ENCODE measurements at regions of chr5 and their contacts with region 1.

Region 1: DNA sequence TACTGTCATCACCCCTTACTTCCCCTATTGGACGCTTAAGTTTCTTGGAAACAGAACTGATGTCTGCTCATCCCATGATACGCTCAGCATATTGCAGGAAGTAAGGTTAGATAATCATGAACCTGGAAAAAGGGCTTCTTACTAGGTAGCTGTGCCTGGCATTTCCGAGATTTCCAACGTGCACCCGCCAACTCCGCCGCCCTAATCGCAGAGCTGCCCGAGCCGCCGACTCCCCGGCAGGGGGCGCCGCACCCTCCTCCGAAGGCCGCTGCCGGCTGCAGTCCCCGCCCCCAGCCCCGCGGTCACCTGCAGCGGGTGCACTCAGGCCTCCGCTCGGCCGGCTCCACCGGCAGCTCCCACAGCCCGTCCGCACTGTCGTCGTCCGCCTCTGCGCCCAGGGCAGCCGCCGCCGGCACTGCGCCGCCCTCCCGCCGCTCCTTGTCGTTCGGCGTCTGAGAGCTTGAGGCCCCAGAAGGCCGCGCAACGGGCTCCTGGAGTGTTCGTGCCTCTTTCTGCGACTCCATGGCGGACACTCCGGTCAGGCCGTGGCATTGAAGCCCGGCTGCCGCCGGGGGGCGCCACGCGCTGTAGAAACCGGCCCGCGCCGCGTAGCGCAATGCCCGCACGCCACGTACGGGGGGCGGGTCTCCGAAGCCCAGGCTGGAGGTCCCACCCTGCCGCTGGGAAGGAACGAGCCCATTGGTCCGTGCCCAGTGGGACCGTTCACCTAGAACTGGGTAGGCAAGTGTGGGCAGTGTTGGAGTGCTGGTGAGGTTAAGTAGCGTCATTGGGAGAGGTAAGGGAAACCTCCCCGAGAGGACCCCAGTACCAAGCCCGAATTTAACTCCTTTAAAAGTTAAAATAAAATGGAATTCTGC is at the start of gene DTWD2:
- DNase-seq: peak; percentile 96
- H3K4me3 ChIP-seq: peak within 1 kb of the TSS; percentile 75
- H3K27ac ChIP-seq: peak within 1 kb of the TSS; percentile 77
- H3K4me1 ChIP-seq: peaks cover 33% of the 10 kb centered on the region
- CTCF ChIP-seq: peak; percentile 98
- total RNA-seq, gene DTWD2: 4.2 and 8.6 TPM in 2 replicates

Region 2: DNA sequence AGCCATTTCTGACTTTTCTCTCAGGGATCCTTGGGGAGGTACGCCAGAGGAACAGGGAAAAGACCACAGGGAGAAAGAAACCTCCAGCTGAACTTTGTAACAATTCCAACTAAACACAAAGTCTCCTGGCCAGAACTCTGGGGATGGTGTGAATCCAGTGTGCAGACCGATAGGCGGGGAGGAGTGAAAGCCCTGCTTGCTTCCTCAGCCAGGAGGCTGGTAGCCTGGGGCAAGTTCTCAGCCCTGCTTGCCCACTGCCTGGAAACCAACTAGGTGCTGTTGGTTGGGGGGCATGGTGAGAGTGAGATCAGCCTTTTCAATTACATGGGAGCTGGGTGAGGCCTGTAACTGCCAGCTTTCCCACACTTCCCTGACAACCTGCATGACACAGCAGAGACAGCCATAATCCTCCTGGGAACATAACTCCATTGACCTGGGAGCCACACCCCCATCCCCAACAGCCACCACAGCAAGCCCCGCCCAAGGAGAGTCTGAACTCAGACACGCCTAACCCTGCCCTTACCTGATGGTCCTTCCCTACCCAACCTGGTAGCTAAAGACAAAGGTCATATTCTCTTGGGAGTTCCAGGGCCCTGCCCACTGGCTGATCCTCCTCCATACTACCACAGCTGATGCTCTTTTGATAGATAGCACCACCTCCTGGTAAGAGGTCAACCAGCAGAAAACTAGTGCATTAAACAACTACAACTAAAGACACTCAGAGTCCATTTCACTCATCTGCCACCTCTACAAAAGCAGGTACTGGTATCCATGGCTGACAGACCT is 267.5 kb after region 1 on chr5:
- CTCF ChIA-PET with region 1: interaction called, 3 read pairs
- POLR2A ChIA-PET with region 1: no interaction called
- intact Hi-C with region 1: loop called (anchors 1 kb)
- DNase-seq: peak; percentile 54
- H3K4me3 ChIP-seq: no peak overlapping the region
- H3K27ac ChIP-seq: no peak overlapping the region
- H3K4me1 ChIP-seq: no peaks in the 10 kb centered on the region
- CTCF ChIP-seq: peak; percentile 74

Region 3: GRCh38 chr5:119435436-119436132 is 447.4 kb after region 1 on chr5:
- CTCF ChIA-PET with region 1: interaction called, 7 read pairs
- POLR2A ChIA-PET with region 1: interaction called, 3 read pairs
- intact Hi-C with region 1: loop called (anchors 1 kb)
- DNase-seq: peak; percentile 80
- H3K4me3 ChIP-seq: no peak overlapping the region
- H3K27ac ChIP-seq: no peak overlapping the region
- H3K4me1 ChIP-seq: no peaks in the 10 kb centered on the region
- CTCF ChIP-seq: peak; percentile 92